ENCODE measurements at regions of chr5 and their contacts with region 1.

Region 1: DNA sequence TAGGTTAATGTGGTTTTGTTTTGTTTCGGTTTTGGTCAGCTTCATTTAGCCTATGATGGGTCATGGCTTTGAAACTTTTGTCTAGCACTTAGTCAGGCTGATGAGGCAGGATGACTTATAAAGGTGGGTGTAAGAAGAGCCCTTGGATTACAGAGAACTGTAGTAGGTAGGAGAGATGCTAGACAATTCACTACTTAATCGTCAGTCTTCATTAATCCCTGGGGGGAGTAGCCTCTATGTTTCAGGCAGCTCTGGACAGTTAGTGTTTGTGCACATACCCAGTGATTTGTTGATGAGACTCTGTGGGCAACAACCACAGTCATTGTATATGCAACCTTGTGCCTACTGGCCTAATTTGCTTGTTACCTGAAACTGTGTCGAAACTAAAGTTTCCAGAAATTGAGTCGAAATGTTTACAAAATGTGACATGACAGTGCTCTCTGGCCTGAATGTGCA is 113.3 kb downstream of the MTREX start:
- DNase-seq: no peak
- ATAC-seq: peak in 1 of 2 donors; percentile 14

Region 2: DNA sequence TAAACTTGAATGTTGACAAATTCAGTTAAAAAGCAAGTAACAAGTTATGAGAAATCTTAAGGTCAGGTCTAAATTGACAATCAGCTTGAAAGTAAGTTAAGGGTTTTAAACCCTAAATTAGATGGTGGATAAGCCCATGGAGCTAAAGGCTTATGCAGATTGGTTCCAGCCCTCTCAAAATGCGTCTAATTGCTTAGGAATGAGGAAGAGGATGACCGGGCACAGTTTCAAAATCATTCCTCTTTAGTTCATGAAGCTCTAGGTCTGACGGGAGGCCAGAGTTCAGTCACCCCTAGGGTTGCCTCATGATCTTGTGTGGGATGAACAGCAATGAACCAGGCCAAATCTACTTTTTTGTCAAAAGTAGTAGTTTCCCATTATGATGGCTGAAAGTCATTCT is 215.6 kb after region 1 on chr5:
- intact Hi-C with region 1: loop called in 1 of 2 experiments (anchors 10 kb)
- DNase-seq: no peak
- ATAC-seq: peak; percentile 45 to 74